Prostate gland (tissue), 2 donors: ENCODE measurements at regions of chr11 and their contacts with region 1.

Region 1: GRCh38 chr11:22787551-22788162 is 41.9 kb downstream of the SVIP start:
- DNase-seq: peak; percentile 6
- H3K4me3 ChIP-seq: no peak overlapping the region
- H3K27ac ChIP-seq: no peak overlapping the region
- H3K4me1 ChIP-seq: no peaks in the 10 kb centered on the region
- H3K27me3 ChIP-seq: no peaks in the 10 kb centered on the region
- CTCF ChIP-seq: peak; percentile 8 to 65 (median 50)
- POLR2A ChIP-seq: no peak

Region 2: DNA sequence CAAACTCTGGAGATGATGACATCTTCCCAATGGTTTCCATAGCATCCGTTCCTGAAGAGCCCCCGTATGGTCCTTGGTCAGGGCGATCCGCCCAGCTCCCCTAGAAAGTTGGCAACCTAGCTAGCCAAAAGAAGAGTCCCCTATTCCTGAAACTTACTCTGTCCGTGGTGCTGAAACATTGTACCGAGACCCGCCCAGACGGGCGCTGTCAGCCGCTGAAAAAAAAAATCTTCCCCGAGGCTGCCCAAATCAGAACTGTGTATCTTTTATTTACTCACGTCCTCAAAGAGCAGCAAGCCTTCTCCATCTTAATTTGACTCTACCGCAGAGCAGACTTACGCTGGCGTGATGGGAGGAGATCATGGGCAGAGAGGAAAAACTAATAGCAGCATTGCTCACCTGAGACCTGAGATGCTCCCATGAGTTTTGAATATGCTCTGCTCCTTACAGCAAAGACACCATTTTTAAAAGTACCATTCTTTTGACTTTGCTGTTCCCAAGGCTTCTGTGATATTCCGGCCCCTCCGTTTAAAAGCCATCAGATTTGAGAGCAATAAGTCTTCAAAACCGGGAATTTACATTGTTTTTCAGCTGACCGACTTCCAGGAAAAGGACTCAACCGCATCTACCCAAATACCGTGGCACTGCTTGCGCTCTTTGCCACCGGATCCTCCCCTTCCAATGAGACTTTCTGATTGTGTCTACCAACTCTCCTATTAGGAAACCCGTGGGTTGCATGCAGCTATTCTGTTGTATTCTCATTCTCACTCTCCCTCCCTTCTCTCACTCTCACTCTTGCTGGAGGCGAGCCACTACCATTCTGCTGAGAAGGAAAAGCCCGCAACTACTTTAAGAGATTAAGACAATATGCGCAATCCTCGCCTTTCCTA is 449.8 kb before region 1 on chr11 and contains the start of gene SLC17A6:
- intact Hi-C with region 1: loop called (anchors 2 kb)
- DNase-seq: no peak
- H3K4me3 ChIP-seq: no peak within 1 kb of the TSS
- H3K27ac ChIP-seq: no peak within 1 kb of the TSS
- H3K4me1 ChIP-seq: no peaks in the 10 kb centered on the region
- H3K27me3 ChIP-seq: peaks cover 22% of the 10 kb centered on the region
- CTCF ChIP-seq: no peak
- POLR2A ChIP-seq: no peak
- total RNA-seq, gene SLC17A6: not detected

Region 3: DNA sequence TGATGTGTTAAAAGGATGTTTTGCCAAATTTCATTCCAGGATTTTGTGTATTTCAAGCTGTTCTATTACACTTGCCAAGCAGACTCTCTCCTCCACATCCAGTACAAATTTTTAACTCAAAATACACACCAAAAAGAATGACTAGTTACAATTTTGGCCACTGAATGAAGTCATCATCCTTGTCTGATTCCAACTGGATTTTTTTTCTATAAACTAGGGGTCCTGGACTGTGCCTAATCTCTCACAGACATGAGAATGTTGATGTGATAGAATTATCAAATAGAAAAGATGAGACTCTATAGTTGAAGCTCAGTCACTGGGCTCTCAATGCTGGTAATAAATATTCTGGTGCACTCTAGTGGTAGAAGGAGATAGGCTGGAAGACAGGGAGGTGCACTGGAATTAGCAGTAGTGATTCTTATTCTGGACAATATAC is 247.8 kb before region 1 on chr11:
- intact Hi-C with region 1: loop called (anchors 10 kb)
- DNase-seq: no peak
- H3K4me3 ChIP-seq: no peak overlapping the region
- H3K27ac ChIP-seq: no peak overlapping the region
- H3K4me1 ChIP-seq: no peaks in the 10 kb centered on the region
- H3K27me3 ChIP-seq: no peaks in the 10 kb centered on the region
- CTCF ChIP-seq: peak in 3 of 4 experiments; percentile 19 to 54 (median 51)
- POLR2A ChIP-seq: no peak

Region 4: GRCh38 chr11:23205156-23205871 is 417.7 kb after region 1 on chr11:
- intact Hi-C with region 1: no loop called
- DNase-seq: no peak
- H3K4me3 ChIP-seq: no peak overlapping the region
- H3K27ac ChIP-seq: no peak overlapping the region
- H3K4me1 ChIP-seq: no peaks in the 10 kb centered on the region
- H3K27me3 ChIP-seq: no peaks in the 10 kb centered on the region
- CTCF ChIP-seq: no peak
- POLR2A ChIP-seq: no peak